ENCODE measurements at regions of chr14 and their contacts with region 1.

Region 1: DNA sequence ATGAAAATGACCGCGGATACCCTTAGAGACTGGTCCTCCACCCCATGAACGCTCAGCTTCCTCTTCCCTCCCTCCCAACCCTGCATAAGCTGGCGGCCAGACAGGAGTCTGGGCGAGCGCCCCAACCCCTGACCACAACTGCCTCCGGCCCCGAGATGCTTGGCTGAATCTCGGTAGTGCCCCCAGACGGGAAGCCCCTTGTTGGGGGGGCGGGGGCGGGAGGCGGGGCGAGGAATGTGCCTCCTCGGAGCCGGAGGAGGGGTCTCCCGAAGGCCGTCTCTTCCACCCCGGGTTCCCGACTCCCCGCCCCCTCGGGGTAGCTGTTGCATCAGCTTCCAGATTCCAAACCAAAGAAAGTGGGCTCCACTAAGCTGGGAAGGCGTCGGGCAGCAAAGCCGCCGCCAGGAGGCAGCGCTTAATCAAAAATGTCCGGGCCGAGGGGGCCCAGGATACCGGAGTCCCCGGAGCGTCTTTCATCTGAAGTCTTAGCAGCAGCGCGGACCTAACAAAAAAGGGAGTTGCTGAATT is 7.1 kb upstream of the MRPL52 start:
- DNase-seq: peak; percentile 74
- CTCF ChIP-seq: peak; percentile 89

Region 2: GRCh38 chr14:22726012-22726411 is 96.6 kb before region 1 on chr14:
- CTCF ChIA-PET with region 1: no interaction called
- POLR2A ChIA-PET with region 1: no interaction called
- DNase-seq: no peak
- CTCF ChIP-seq: no peak

Region 3: DNA sequence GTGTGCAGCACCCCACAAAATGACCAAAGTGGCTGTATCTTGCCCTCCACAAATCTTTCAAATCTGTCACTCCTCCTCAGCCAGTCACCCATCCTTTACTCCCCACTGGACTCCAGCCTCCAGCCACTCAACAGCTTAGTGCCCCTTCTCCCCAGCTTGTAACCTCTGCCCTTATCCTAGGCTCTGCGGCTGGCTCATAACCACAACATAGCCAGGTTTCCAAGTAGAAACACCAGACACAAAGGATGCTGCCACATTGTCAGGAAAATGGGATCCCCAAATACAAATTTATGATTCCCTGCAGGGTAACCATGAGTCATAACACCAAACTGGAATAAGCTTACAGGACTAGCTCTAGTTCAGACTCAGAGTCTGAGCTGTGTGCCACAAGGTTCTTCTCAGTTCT is 41.0 kb before region 1 on chr14:
- CTCF ChIA-PET with region 1: interaction called, 11 read pairs
- POLR2A ChIA-PET with region 1: no interaction called
- DNase-seq: no peak
- CTCF ChIP-seq: no peak

Region 4: GRCh38 chr14:22794551-22794951 is 28.1 kb before region 1 on chr14:
- CTCF ChIA-PET with region 1: interaction called, 19 read pairs
- POLR2A ChIA-PET with region 1: no interaction called
- DNase-seq: peak; percentile 62
- CTCF ChIP-seq: no peak

Region 5: DNA sequence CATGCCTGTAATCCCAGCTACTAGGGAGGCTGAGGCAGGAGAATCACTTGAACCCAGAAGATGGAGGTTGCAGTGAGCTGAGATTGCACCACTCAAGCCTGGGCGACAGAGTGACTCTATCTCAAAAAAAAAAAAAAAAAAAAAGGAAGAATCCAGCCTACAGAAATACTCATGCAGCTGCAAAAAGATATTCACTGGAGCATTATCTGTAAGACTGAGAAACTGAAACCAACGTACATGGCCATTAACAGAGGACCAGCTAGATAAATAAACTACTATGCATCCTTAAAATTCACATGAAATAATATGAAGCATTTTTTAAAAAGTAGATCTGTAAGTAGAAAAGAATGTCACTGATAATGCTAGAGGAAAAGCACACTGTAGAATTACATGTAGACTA is 10.9 kb before region 1 on chr14:
- CTCF ChIA-PET with region 1: interaction called, 20 read pairs
- POLR2A ChIA-PET with region 1: no interaction called
- DNase-seq: no peak
- CTCF ChIP-seq: no peak

Region 6: DNA sequence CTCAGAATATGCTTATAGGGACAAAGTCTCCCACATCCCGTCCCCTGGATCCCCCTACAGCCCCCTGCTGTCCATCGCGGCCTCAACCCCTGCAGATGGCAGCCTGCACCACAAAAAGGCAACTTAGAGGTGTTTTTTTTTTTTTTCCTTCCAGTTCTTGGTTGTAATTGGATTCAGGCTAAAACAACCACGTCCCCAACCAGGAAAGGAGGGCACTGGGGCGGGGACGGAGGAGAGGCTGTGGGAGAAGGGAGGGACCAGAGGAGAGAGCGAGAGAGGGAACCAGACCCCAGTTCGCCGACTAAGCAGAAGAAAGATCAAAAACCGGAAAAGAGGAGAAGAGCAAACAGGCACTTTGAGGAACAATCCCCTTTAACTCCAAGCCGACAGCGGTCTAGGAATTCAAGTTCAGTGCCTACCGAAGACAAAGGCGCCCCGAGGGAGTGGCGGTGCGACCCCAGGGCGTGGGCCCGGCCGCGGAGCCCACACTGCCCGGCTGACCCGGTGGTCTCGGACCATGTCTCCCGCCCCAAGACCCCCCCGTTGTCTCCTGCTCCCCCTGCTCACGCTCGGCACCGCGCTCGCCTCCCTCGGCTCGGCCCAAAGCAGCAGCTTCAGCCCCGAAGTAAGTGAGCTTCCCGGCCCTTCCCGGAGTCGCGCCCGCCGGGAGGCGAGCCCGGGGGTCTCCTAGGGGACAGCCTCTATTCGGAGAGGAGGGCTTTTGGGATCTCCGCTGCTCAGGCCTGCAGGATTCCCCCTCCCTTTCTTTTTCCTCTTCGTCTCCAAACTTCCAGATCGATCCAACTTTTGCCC is 13.9 kb after region 1 on chr14 and contains the start of gene MMP14:
- CTCF ChIA-PET with region 1: interaction called, 49 read pairs
- POLR2A ChIA-PET with region 1: no interaction called
- DNase-seq: no peak
- CTCF ChIP-seq: no peak

Region 7: DNA sequence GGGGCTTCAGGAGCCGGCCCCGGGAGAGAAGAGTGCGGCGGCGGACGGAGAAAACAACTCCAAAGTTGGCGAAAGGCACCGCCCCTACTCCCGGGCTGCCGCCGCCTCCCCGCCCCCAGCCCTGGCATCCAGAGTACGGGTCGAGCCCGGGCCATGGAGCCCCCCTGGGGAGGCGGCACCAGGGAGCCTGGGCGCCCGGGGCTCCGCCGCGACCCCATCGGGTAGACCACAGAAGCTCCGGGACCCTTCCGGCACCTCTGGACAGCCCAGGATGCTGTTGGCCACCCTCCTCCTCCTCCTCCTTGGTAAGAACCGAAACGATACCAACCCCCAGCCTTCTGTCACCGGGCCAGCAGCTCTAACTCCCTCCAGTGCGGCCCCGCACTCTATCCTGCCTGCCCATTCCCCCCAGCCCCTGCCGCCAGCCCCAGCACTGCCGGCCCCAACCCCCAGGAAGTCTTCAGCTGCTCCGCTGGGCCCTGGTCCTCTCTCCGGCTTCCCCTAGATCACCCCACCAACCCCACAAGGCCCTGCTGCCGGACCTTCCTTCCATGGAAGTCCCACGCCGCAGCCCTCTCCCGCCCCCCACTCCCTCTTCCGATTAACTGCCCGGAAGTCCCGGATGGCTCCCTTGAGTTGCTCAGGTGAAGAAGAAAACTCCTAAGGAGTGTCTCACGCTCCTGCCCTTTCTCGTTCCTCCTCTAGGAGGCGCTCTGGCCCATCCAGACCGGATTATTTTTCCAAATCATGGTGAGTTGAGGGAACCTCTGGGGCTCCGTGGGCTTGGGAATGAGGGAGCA is 49.6 kb after region 1 on chr14:
- CTCF ChIA-PET with region 1: interaction called, 25 read pairs
- POLR2A ChIA-PET with region 1: no interaction called
- DNase-seq: peak; percentile 80
- CTCF ChIP-seq: peak; percentile 94

Region 8: GRCh38 chr14:22900081-22900799 is 77.6 kb after region 1 on chr14:
- CTCF ChIA-PET with region 1: interaction called, 12 read pairs
- POLR2A ChIA-PET with region 1: no interaction called
- DNase-seq: peak; percentile 70
- CTCF ChIP-seq: peak; percentile 59

Region 9: GRCh38 chr14:23436327-23437132 is 613.9 kb after region 1 on chr14:
- CTCF ChIA-PET with region 1: no interaction called
- POLR2A ChIA-PET with region 1: no interaction called
- DNase-seq: no peak
- CTCF ChIP-seq: no peak